Activated CD4-positive, alpha-beta memory T cell treated with anti-CD3 and anti-CD28 coated beads for 36 hours (primary cell): ENCODE measurements at regions of chr4 and their contacts with region 1.

Region 1: DNA sequence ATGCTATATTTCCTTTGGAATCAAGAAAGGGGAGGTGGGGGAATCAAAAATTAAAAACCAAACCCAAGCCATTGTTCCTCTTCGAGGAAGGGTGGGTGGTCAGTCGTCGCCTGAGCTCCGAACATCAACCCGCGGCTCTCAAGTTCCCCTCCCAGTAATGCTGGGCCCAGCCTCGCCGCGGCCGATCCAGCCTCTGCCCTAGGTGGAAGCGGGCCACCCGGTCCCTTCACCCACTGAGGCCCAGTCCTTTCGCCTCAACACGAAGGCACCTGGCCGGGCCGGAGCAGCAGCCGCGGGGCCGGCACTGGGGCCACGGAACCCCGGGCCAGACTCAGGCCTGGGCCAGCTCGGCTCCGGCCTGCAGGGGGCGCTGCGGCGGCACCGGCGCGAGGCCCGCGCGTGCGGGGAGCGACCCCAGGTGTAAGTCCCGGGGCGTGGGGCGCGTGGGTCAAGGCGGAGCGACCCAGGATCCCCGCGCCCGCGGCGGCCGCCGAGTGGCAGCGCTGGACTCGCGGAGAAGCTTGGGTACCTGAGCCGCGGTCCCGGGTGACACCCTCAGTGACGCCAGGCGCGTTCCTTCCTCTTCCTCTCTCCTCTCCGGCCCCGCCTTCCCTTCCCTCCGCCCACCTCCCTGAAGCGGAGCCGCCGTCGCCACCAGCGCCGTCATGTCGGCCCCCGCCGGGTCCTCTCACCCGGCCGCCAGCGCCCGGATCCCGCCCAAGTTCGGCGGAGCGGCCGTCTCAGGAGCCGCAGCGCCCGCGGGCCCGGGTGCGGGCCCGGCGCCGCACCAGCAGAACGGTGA is at the start of gene SEC24B:
- DNase-seq: peak; percentile 92
- H3K4me3 Mint-ChIP-seq: peak within 1 kb of the TSS; percentile 86
- H3K27ac Mint-ChIP-seq: peak within 1 kb of the TSS; percentile 85
- H3K4me1 Mint-ChIP-seq: peaks cover 67% of the 10 kb centered on the region
- H3K27me3 Mint-ChIP-seq: no peaks in the 10 kb centered on the region
- total RNA-seq, gene SEC24B: 24.7 to 25.2 TPM

Region 2: DNA sequence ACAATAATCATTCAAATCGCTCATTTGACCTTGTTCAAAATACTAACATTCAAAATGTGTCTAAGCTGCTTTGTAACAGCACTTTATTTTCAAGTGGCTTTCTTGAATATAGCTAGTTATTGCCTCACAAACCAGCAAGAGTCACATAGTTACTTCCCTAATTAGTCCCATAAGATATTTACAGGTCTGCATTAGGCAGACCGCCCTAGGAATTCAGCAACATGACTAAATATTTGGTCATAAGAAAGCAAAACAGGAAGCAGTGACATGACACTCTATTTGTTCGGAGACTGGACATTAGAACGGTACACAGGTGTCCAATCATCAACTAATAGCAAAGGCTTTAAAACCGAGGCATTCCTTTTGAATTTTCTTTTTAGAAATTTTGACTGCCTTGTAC is 393.0 kb before region 1 on chr4:
- CTCF ChIA-PET with region 1: no interaction called
- POLR2A ChIA-PET with region 1: no interaction called
- intact Hi-C with region 1: no loop called
- DNase-seq: no peak
- H3K4me3 Mint-ChIP-seq: no peak overlapping the region
- H3K27ac Mint-ChIP-seq: no peak overlapping the region
- H3K4me1 Mint-ChIP-seq: no peaks in the 10 kb centered on the region
- H3K27me3 Mint-ChIP-seq: peaks cover 4% of the 10 kb centered on the region

Region 3: GRCh38 chr4:109472343-109472761 is 38.9 kb after region 1 on chr4:
- CTCF ChIA-PET with region 1: interaction called, 4 read pairs
- POLR2A ChIA-PET with region 1: no interaction called
- intact Hi-C with region 1: loop called (anchors 2 kb)
- DNase-seq: no peak
- H3K4me3 Mint-ChIP-seq: no peak overlapping the region
- H3K27ac Mint-ChIP-seq: no peak overlapping the region
- H3K4me1 Mint-ChIP-seq: peaks cover 57% of the 10 kb centered on the region
- H3K27me3 Mint-ChIP-seq: no peaks in the 10 kb centered on the region

Region 4: DNA sequence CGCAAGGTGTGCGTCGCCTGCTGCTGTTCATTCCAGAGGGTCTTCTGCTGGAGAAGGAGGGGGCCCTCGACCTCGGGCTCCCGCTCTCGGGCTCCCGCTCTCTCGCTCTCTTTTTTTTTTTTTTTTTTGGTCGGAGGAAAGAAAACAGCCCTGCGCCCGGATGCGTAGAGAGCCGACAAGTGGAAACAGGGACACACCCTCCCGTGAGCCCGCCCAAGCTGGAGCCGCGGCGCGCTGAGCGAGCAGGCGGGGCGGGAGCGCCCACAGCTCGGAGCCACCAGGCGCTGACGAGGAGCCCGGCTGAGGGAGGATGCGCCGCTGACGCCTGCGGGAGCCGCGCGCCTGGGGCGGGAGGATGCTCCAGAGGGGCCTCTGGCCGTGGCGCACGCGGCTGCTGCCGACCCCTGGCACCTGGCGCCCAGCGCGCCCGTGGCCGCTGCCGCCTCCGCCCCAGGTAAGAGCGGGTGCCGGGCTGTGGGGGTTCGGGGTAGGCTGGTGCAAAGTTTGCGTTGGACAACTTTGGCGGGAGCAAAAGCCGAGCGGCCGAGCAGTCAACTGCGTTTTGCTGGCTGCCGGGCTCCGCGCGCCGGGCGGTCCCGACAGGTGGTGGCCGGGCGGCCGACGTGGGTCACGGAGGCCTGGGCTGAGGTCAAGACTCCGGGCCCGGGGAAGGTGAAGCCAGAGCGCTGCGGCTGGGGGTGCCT is 126.7 kb after region 1 on chr4 and contains the start of gene MCUB:
- CTCF ChIA-PET with region 1: interaction called, 6 read pairs
- POLR2A ChIA-PET with region 1: interaction called, 25 read pairs
- intact Hi-C with region 1: loop called (anchors 2 kb)
- DNase-seq: peak; percentile 95
- H3K4me3 Mint-ChIP-seq: peak within 1 kb of the TSS; percentile 84
- H3K27ac Mint-ChIP-seq: peak within 1 kb of the TSS; percentile 92
- H3K4me1 Mint-ChIP-seq: peaks cover 52% of the 10 kb centered on the region
- H3K27me3 Mint-ChIP-seq: no peaks in the 10 kb centered on the region
- total RNA-seq, gene MCUB: 76.7 to 80.5 TPM

Region 5: DNA sequence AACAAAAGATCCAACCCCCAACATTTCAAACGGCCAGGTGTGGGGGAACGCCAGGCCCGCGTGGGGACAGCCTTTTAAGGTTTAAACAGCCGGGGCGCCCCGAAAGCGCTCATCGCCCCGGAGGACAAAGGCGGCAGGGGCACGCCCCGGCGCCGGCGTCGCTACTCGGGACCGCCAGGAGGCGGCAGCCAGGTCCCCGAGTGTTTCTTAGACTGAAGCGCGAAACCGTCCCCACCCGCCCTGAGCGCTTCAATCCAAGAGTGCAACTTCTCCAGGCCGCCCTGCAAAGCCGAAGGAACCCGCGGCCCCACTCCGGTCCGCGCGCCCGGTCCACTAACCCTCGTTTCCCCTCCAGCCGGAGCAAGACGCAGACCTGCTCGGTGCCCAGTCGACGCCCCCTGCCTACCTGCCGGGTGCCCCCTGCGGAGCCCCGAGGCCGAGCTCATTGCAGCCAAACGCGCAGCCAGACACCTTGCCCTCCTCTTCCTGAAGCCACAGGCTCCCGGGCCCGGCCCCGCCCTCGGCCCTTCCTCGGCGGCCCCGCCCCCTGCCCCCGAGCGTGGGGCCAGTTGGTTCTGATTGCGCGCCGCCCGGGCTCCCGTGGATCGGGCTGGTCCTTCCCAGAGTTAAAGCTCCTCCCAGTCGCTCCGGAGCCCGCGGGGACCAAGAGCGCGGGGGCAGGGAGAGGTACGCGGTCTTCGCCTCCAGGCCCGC is 269.7 kb after region 1 on chr4 and contains the start of gene CASP6:
- CTCF ChIA-PET with region 1: interaction called, 8 read pairs
- POLR2A ChIA-PET with region 1: interaction called, 5 read pairs
- intact Hi-C with region 1: loop called (anchors 2 kb)
- DNase-seq: peak; percentile 79
- H3K4me3 Mint-ChIP-seq: peak within 1 kb of the TSS; percentile 90
- H3K27ac Mint-ChIP-seq: peak within 1 kb of the TSS; percentile 82
- H3K4me1 Mint-ChIP-seq: peaks cover 34% of the 10 kb centered on the region
- H3K27me3 Mint-ChIP-seq: no peaks in the 10 kb centered on the region
- total RNA-seq, gene CASP6: 18.4 to 29.9 TPM

Region 6: GRCh38 chr4:109826719-109827118 is 393.3 kb after region 1 on chr4:
- CTCF ChIA-PET with region 1: interaction called, 18 read pairs
- POLR2A ChIA-PET with region 1: no interaction called
- intact Hi-C with region 1: no loop called
- DNase-seq: no peak
- H3K4me3 Mint-ChIP-seq: no peak overlapping the region
- H3K27ac Mint-ChIP-seq: no peak overlapping the region
- H3K4me1 Mint-ChIP-seq: peaks cover 6% of the 10 kb centered on the region
- H3K27me3 Mint-ChIP-seq: no peaks in the 10 kb centered on the region

Region 7: GRCh38 chr4:109977854-109978501 is 544.6 kb after region 1 on chr4:
- CTCF ChIA-PET with region 1: interaction called, 10 read pairs
- POLR2A ChIA-PET with region 1: no interaction called
- intact Hi-C with region 1: no loop called
- DNase-seq: no peak
- H3K4me3 Mint-ChIP-seq: no peak overlapping the region
- H3K27ac Mint-ChIP-seq: no peak overlapping the region
- H3K4me1 Mint-ChIP-seq: no peaks in the 10 kb centered on the region
- H3K27me3 Mint-ChIP-seq: peaks cover 9% of the 10 kb centered on the region

Region 8: GRCh38 chr4:110296892-110297291 is 863.5 kb after region 1 on chr4:
- CTCF ChIA-PET with region 1: no interaction called
- POLR2A ChIA-PET with region 1: no interaction called
- intact Hi-C with region 1: loop called (anchors 10 kb)
- DNase-seq: no peak
- H3K4me3 Mint-ChIP-seq: no peak overlapping the region
- H3K27ac Mint-ChIP-seq: no peak overlapping the region
- H3K4me1 Mint-ChIP-seq: peaks cover 12% of the 10 kb centered on the region
- H3K27me3 Mint-ChIP-seq: peaks cover 38% of the 10 kb centered on the region